ENCODE measurements at regions of chr5 and their contacts with region 1.

Region 1: DNA sequence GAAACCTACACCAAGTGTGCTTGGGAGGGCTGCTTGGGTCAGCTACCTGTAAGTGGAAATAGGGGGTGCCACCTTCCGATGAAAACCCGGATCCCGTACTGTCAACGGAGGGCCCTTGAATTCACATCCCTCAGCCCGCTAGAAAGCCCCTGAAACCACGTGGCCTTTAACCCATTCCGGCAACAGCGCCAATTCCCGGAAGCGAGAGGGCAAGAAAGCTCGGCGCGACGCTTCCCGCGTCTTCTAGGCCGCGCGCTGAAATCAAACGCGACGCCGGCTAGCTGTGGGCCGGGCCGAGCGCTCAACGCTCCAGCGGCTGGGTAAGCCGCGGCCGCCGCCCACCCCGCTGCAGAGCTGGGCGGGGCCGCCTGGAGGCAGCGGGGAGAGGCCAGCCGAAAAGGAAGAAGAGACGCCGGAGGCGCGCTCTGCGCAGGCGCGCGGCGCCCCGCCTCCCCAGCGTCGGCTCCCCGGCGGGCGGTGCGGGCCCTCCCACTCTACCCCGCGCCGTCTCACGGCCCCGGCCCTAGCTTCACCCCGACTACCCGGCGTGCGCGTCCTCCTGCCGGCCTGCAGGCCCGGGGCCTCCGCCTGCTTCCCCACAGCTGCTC is at the start of gene KIF2A:
- DNase-seq: peak; percentile 86 to 92
- ATAC-seq: peak; percentile 98 to 100 (median 98)
- H3K4me3 ChIP-seq: peak within 1 kb of the TSS; percentile 87 to 99 (median 96)
- H3K27ac ChIP-seq: peak within 1 kb of the TSS; percentile 65 to 94 (median 86)
- H3K4me1 ChIP-seq: peaks cover 0 to 40% (median 16%) of the 10 kb centered on the region in 9 donors
- H3K27me3 ChIP-seq: no peaks in the 10 kb centered on the region
- CTCF ChIP-seq: peak in 4 of 9 donors; percentile 18 to 44 (median 36)
- total RNA-seq, gene KIF2A: 9.2 to 17.1 (median 12.2) TPM

Region 2: GRCh38 chr5:62340392-62340791 is 34.6 kb after region 1 on chr5:
- intact Hi-C with region 1: loop called in 1 of 10 experiments (anchors 5 kb)
- DNase-seq: no peak
- ATAC-seq: no peak
- H3K4me3 ChIP-seq: no peak overlapping the region
- H3K27ac ChIP-seq: no peak overlapping the region
- H3K4me1 ChIP-seq: peaks cover 0 to 9% (median 0%) of the 10 kb centered on the region in 9 donors
- H3K27me3 ChIP-seq: no peaks in the 10 kb centered on the region
- CTCF ChIP-seq: peak in 4 of 9 donors; percentile 14 to 48 (median 38)

Region 3: GRCh38 chr5:62354028-62354874 is 48.4 kb after region 1 on chr5:
- intact Hi-C with region 1: loop called in 1 of 10 experiments (anchors 10 kb)
- DNase-seq: peak in 1 of 2 donors; percentile 17
- ATAC-seq: peak in 3 of 8 donors; percentile 42 to 59 (median 59)
- H3K4me3 ChIP-seq: no peak overlapping the region
- H3K27ac ChIP-seq: no peak overlapping the region
- H3K4me1 ChIP-seq: no peaks in the 10 kb centered on the region
- H3K27me3 ChIP-seq: no peaks in the 10 kb centered on the region
- CTCF ChIP-seq: peak; percentile 48 to 74 (median 64)

Region 4: GRCh38 chr5:62403434-62404250 is 97.8 kb after region 1 on chr5 and contains the start of gene DIMT1:
- intact Hi-C with region 1: loop called in 2 of 10 experiments (anchors 5 to 10 kb)
- DNase-seq: peak; percentile 92 to 97
- ATAC-seq: peak; percentile 99 to 100 (median 99)
- H3K4me3 ChIP-seq: peak within 1 kb of the TSS; percentile 55 to 99 (median 83)
- H3K27ac ChIP-seq: peak within 1 kb of the TSS; percentile 88 to 99 (median 97)
- H3K4me1 ChIP-seq: peaks cover 5 to 25% (median 14%) of the 10 kb centered on the region in 9 donors
- H3K27me3 ChIP-seq: no peaks in the 10 kb centered on the region
- CTCF ChIP-seq: peak in 2 of 9 donors; percentile 12 to 21
- total RNA-seq, gene DIMT1: 15.9 to 23.0 (median 19.0) TPM

Region 5: GRCh38 chr5:62412537-62413329 is 106.9 kb after region 1 on chr5 and contains the start of gene IPO11:
- intact Hi-C with region 1: loop called in 2 of 10 experiments (anchors 5 to 10 kb)
- DNase-seq: peak; percentile 98 to 99
- ATAC-seq: peak; percentile 98 to 99 (median 99)
- H3K4me3 ChIP-seq: peak within 1 kb of the TSS; percentile 73 to 98 (median 88)
- H3K27ac ChIP-seq: peak within 1 kb of the TSS in 9 of 10 donors; percentile 54 to 85 (median 66)
- H3K4me1 ChIP-seq: peaks cover 0 to 21% (median 13%) of the 10 kb centered on the region in 9 donors
- H3K27me3 ChIP-seq: no peaks in the 10 kb centered on the region
- CTCF ChIP-seq: no peak
- total RNA-seq, gene IPO11: 23.9 to 39.3 (median 32.9) TPM